Ovary (tissue), 10 donors: ENCODE measurements at regions of chr1 and their contacts with region 1.

Region 1: DNA sequence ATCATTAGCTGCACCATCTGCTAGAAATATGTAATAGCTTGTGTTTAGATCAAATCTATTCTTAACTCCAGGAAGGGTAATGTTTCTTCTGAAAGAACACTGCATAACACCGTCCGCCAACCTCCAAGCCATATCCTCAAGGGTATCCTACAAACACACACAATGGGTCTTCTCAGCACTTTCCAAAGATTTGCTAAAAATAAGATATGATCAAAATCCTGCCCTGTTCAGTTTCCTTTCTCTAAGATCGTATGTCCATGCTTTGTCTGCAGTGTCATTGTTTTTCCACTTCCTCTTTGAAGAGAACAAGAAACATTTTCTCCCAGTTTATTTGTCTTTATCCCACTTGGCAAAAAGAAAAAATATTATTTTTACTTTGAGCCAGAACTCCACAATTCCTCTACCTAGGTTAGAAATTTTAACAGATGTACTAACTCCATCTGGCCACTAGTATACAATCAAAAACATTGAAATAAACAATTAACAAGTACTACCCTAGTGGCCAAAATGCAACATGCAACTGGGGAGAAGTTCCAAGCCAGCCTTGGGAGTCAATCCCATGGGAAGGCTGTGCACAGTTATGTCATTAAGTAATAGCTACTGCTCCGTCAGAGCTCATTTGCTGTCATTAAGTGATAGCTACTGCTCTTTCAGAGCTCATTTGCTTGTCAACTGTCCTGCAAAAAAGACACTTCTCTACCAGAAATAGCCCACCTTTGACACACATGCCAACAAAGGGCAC is 37.8 kb downstream of the FRRS1 start:
- DNase-seq: no peak
- H3K4me3 ChIP-seq: no peak overlapping the region
- H3K27ac ChIP-seq: no peak overlapping the region
- H3K4me1 ChIP-seq: no peaks in the 10 kb centered on the region
- H3K27me3 ChIP-seq: no peaks in the 10 kb centered on the region
- CTCF ChIP-seq: no peak
- EP300 ChIP-seq: no peak
- POLR2A ChIP-seq: no peak

Region 2: DNA sequence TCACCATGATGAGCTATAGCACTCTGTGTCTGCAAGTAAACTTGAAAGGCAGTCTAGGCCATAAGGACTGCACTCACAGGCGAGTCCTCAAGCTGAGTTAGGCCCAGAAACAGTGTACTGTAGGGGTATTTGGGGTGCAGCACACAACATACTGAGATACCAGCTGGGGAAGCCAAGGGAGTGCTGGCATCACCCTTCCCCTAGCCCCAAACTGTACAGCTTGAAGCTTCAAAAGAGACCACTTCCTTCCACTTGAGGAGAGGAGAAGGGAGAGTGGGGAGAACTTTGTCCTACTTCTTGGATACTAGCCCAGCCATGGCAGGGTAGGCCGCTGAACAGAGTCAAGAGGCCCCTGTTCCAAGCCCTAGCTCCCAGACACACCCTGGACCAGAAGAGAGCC is 1091.3 kb before region 1 on chr1:
- intact Hi-C with region 1: loop called in 1 of 4 experiments (anchors 5 kb)
- DNase-seq: no peak
- H3K4me3 ChIP-seq: no peak overlapping the region
- H3K27ac ChIP-seq: no peak overlapping the region
- H3K4me1 ChIP-seq: no peaks in the 10 kb centered on the region
- H3K27me3 ChIP-seq: no peaks in the 10 kb centered on the region
- CTCF ChIP-seq: no peak
- EP300 ChIP-seq: no peak
- POLR2A ChIP-seq: no peak

Region 3: GRCh38 chr1:99662581-99663208 is 66.0 kb before region 1 on chr1:
- intact Hi-C with region 1: no loop called
- DNase-seq: peak; percentile 76 to 94 (median 86)
- H3K4me3 ChIP-seq: no peak overlapping the region
- H3K27ac ChIP-seq: peak overlapping the region in 1 of 2 donors; percentile 81
- H3K4me1 ChIP-seq: peaks cover 11% of the 10 kb centered on the region
- H3K27me3 ChIP-seq: no peaks in the 10 kb centered on the region
- CTCF ChIP-seq: no peak
- EP300 ChIP-seq: peak; percentile 67
- POLR2A ChIP-seq: no peak